Lower lobe of right lung (tissue), 2 donors: ENCODE measurements at regions of chr12 and their contacts with region 1.

Region 1: GRCh38 chr12:114662512-114663177 is 21.3 kb downstream of the TBX3 start:
- DNase-seq: peak; percentile 75
- ATAC-seq: peak; percentile 62 to 71
- H3K4me3 ChIP-seq: no peak overlapping the region
- H3K27ac ChIP-seq: no peak overlapping the region
- H3K4me1 ChIP-seq: peaks cover 3% of the 10 kb centered on the region
- H3K27me3 ChIP-seq: peaks cover 48% of the 10 kb centered on the region
- CTCF ChIP-seq: peak; percentile 96

Region 2: DNA sequence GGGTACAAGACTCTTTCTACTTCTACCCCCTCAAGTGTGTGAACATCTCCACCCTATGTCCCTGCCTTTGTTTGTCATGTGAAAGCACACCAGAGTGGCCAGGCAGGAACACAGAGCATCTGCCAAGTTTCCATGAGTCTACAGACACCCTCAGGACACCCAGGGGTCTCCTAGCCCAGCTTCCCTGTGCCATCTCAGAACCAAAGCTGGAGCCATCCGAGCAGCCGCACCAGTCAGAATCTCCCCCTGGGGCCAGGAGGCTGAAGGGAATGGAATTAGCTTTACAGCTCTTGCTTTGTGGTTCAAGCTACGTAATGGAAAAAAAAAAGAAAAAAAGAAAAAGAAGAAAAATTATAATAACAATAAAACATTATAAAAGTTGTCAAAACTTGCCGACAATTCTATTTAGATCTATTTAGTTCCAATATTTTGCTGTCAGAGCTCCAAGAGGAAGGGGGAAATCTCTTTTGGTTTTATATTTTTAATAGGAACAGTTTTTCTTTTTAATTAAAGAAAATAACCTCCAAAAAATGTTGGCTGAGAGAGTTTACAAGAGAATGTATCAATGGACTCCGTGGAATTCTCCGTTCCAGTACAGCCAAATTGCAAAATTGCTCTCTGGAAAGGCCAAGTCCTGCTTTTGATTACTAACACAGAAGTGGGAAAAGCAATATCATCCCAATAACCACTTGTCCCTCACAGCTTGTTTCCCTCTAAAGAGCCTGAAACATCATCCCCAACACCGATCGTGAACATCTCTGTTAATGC is 293.8 kb before region 1 on chr12:
- intact Hi-C with region 1: no loop called
- DNase-seq: no peak
- ATAC-seq: no peak
- H3K4me3 ChIP-seq: no peak overlapping the region
- H3K27ac ChIP-seq: no peak overlapping the region
- H3K4me1 ChIP-seq: peaks cover 12% of the 10 kb centered on the region
- H3K27me3 ChIP-seq: no peaks in the 10 kb centered on the region
- CTCF ChIP-seq: no peak

Region 3: DNA sequence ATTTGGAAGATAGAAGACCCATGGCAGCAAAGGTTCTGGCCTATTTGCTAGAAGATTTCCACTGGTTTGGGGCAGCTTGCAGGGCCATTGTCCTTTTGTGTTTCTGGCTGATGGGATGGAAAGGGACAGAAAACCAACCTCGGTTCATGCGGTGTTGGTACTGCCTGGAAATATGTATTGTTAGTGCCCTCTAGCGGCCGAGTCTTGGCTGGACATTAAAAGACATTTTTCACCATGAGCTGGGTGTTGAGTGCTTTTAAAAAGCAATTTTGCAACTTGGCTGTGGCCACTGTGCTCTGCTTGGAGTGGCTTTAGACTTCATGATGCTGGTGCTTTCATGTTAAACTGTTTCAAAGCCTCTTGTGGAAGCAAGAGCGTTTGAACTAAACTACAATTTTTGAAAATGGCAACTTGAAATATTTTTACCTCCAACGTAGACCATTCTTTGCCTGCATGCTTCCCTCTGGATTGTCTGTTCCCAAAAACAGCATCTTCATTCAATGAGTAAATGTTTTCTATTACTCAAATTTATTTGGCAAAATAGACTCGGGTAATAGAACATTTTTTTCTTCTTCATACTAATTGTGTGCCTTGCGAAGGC is 154.0 kb before region 1 on chr12:
- intact Hi-C with region 1: no loop called
- DNase-seq: peak; percentile 54
- ATAC-seq: peak; percentile 71 to 79
- H3K4me3 ChIP-seq: no peak overlapping the region
- H3K27ac ChIP-seq: no peak overlapping the region
- H3K4me1 ChIP-seq: no peaks in the 10 kb centered on the region
- H3K27me3 ChIP-seq: peaks cover 7% of the 10 kb centered on the region
- CTCF ChIP-seq: peak; percentile 79

Region 4: DNA sequence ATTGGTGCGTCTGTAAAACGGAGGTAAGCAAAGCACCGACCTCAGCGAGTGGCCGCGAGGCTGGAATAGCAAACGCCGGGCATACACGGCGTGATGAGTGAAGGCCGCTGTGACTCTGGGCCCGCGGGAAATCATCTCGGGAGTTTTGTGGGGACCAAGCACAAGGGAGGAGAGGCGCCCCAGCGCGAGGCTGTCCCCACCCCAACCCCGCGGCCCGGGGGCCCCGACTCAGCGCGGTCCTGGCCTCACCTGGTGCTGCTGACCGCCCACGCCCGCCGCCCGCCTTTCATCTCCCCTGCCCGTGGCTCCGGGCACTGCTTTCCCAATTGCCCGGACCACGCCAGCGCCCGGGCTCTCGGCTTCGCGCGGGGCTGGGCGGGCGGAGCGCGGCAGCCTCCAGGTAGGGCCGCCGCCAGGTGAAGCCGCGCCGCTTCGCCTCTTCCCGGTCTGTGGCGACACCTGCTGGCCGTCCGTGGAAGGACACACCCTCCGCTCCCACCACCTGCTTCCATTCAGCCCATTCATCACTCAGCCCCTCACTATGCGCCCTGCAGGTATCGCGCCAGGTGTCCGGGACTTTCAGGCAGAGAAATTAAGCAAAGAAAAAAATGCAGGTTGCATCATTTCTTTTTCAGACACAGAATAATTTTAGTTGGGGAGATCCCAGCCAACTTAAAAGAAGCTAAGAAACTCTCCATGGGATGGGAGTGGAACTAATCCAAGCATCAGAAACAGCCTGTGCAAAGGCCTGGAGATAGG is 1254.4 kb after region 1 on chr12:
- intact Hi-C with region 1: loop called (anchors 5 kb)
- DNase-seq: peak; percentile 76
- ATAC-seq: peak; percentile 93 to 94
- H3K4me3 ChIP-seq: peak overlapping the region; percentile 29
- H3K27ac ChIP-seq: no peak overlapping the region
- H3K4me1 ChIP-seq: peaks cover 7% of the 10 kb centered on the region
- H3K27me3 ChIP-seq: peaks cover 23% of the 10 kb centered on the region
- CTCF ChIP-seq: peak; percentile 96